ENCODE measurements at regions of chr6 and their contacts with region 1.

Region 1: DNA sequence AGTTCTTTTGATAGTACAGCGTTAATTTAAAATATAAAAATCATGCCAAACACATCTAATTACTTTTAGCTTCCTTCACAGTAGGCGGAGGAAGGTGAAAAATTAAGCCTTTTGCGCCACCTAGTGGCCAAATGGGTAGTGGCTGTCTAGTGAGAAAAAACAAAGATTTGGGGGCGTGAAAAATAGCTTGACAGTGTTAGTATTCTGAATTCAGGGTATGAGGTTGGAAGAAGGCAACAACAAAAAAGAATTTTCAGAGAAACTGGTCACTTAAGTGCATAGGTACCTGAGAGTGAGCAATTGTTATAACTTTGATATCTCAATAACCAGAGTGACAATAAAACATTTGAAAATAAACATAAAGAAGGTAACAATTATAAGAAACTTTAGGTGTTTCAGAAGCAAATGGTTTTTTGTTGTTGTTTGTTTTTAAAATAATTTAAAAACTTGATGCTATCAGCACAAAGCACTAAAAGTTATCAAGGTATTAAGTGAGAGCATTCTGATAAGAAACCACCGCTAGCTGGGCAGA is 14.3 kb downstream of the PSMB9 start:
- DNase-seq: peak; percentile 20 to 63
- ATAC-seq: peak; percentile 84 to 86; a peak in 5 of 6 replicates
- H3K4me3 ChIP-seq: no peak overlapping the region
- H3K27ac ChIP-seq: no peak overlapping the region
- H3K4me1 ChIP-seq: no peaks in the 10 kb centered on the region
- CTCF ChIP-seq: peak; percentile 83
- EP300 ChIP-seq: no peak
- POLR2A ChIP-seq: no peak
- RAD21 ChIP-seq: peak; percentile 88 to 91

Region 2: GRCh38 chr6:32785781-32786533 is 82.4 kb before region 1 on chr6:
- CTCF ChIA-PET with region 1: interaction called, 14 read pairs
- POLR2A ChIA-PET with region 1: no interaction called
- DNase-seq: peak; percentile 37 to 46
- ATAC-seq: peak; percentile 92 to 94
- H3K4me3 ChIP-seq: no peak overlapping the region
- H3K27ac ChIP-seq: no peak overlapping the region
- H3K4me1 ChIP-seq: no peaks in the 10 kb centered on the region
- CTCF ChIP-seq: peak; percentile 62
- EP300 ChIP-seq: no peak
- POLR2A ChIP-seq: no peak
- RAD21 ChIP-seq: peak; percentile 69 to 72

Region 3: GRCh38 chr6:32853541-32854375 is 14.6 kb before region 1 on chr6 and contains the starts of genes PSMB9 and TAP1:
- CTCF ChIA-PET with region 1: interaction called, 53 read pairs
- POLR2A ChIA-PET with region 1: no interaction called
- DNase-seq: peak; percentile 85 to 90
- ATAC-seq: peak; percentile 92 to 94
- H3K4me3 ChIP-seq: peak within 1 kb of the TSS; percentile 61
- H3K27ac ChIP-seq: peak within 1 kb of the TSS; percentile 95 to 96
- H3K4me1 ChIP-seq: peaks cover 9% of the 10 kb centered on the region; the same call in 2 of the 3 replicates
- CTCF ChIP-seq: peak; percentile 62
- EP300 ChIP-seq: no peak
- POLR2A ChIP-seq: peak; percentile 47
- RAD21 ChIP-seq: peak; percentile 33 to 51; a peak in 4 of 5 replicates
- polyA plus RNA-seq, gene PSMB9: 11.7 and 12.5 TPM in 2 replicates
- polyA plus RNA-seq, gene TAP1: 21.2 and 28.2 TPM in 2 replicates

Region 4: GRCh38 chr6:32905078-32905477 is 36.8 kb after region 1 on chr6:
- CTCF ChIA-PET with region 1: interaction called, 10 read pairs
- POLR2A ChIA-PET with region 1: no interaction called
- DNase-seq: no peak
- ATAC-seq: no peak
- H3K4me3 ChIP-seq: no peak overlapping the region
- H3K27ac ChIP-seq: peak overlapping the region; percentile 55 to 70; a peak in 5 of 6 replicates
- H3K4me1 ChIP-seq: peaks cover 69% of the 10 kb centered on the region
- CTCF ChIP-seq: no peak
- EP300 ChIP-seq: no peak
- POLR2A ChIP-seq: no peak
- RAD21 ChIP-seq: no peak

Region 5: DNA sequence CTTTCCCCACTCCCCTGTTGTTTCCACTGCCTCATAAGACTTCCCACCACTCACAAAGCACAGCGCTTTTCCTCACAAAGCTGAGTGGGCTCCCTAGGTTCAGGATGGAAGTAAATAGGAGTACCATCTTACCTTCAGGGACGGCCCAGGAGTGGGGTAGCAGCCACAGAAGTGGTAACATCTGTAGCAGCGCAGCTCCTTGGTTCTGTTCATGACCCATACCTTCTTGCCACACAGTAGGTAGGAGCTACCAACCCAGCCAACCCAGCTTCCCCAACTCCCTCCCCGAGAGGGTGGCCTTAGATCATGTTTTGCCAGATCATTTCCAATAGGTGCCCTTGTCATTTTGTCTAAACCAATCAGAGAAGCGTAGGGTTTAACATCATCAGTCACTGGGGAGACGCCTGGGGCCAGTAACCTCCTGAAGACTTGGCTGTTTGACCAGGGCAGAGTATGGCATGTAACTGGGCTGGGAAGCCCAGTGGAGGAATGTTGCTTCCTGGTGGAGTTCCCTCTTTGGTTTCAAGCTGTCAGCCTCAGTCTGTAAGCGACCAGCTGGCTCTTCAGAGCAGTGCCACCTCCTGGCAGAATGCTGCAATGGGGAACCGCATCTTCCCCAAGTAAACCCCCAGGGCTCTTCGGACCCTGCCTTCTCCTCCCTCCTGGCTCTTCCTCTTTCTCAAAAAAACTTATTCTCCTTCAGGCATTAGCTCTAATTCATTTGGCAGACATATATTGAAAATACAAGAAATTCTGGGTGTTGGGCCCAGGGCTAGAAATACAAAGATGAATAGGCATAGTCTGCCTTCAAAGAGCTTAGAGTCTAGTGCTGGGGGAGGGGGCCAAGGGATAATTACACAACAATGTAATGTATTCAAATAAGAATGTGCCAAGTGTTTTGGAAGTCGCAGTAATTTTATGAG is 84.8 kb after region 1 on chr6 and contains the start of gene HLA-DMA:
- CTCF ChIA-PET with region 1: interaction called, 14 read pairs
- POLR2A ChIA-PET with region 1: no interaction called
- DNase-seq: peak; percentile 49 to 93
- ATAC-seq: peak; percentile 88 to 99
- H3K4me3 ChIP-seq: no peak within 1 kb of the TSS
- H3K27ac ChIP-seq: no peak within 1 kb of the TSS
- H3K4me1 ChIP-seq: peaks cover 5% of the 10 kb centered on the region; the same call in 1 of the 3 replicates
- CTCF ChIP-seq: peak; percentile 50
- EP300 ChIP-seq: no peak
- POLR2A ChIP-seq: no peak
- RAD21 ChIP-seq: peak; percentile 24 to 28; a peak in 2 of 5 replicates
- polyA plus RNA-seq, gene HLA-DMA: 5.6 and 7.0 TPM in 2 replicates